OCI-LY7 (cell line): ENCODE measurements at regions of chr4 and their contacts with region 1.

Region 1: GRCh38 chr4:168917138-168917779 is 92.8 kb downstream of the CBR4 start:
- DNase-seq: peak; percentile 27
- H3K4me3 ChIP-seq: no peak overlapping the region
- H3K27ac ChIP-seq: no peak overlapping the region
- H3K4me1 ChIP-seq: no peaks in the 10 kb centered on the region
- CTCF ChIP-seq: peak; percentile 78

Region 2: DNA sequence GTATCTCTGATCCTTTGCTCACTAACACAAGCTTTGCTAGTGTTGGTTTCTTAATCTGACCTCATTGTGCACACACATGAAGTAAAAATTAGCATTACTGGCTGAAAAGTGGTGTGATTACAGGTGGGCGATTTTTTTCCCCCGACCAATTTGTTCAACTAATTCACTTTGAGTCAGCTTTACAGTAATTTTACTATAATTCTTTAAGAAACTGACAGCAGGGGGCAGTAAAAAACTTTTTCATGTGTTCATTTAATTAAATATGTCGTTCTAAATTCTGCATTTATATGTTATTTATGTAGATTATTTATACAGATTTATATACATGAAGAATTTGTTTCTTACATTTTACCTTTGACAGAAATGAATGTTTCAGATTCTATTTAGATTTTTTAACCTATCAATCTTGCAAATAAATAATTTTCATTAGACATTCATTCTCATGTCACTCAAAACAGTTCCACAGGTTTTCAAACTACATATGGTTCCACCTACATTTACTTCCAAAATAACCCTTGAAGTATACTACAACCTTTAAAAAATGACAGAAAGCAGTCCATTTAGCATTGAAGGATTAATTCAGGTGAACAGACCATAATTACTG is 402.9 kb before region 1 on chr4:
- CTCF ChIA-PET with region 1: no interaction called
- POLR2A ChIA-PET with region 1: no interaction called
- intact Hi-C with region 1: loop called (anchors 2 kb)
- DNase-seq: peak; percentile 38
- H3K4me3 ChIP-seq: no peak overlapping the region
- H3K27ac ChIP-seq: no peak overlapping the region
- H3K4me1 ChIP-seq: no peaks in the 10 kb centered on the region
- CTCF ChIP-seq: peak; percentile 77